ENCODE measurements at regions of chr14 and their contacts with region 1.

Region 1: DNA sequence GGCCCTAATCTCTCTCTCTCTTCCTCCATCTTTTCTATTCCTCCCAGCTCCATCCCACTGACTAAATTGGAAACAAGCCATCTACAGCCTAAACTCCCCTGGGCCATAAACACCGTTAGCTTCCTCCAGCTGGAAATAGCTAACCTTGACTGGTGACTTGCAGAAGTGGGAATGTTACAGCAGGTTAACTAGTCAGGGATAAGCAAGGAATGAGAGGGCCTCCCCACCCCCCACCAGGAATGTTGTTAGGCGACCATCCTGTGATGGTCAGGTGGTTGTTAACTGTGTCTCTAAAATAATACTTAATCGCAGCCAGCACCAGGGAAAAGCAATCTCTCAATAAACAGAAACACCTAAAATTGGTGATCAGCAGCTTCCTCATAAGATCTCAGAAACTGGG is 40.8 kb downstream of the MIS18BP1 start:
- DNase-seq: peak; percentile 73 to 79
- H3K4me3 ChIP-seq: no peak overlapping the region
- H3K4me3 Mint-ChIP-seq: peak overlapping the region; percentile 48
- H3K27ac Mint-ChIP-seq: peak overlapping the region; percentile 54
- H3K4me1 ChIP-seq: peaks cover 62% of the 10 kb centered on the region
- H3K4me1 Mint-ChIP-seq: peaks cover 30% of the 10 kb centered on the region
- H3K27me3 ChIP-seq: no peaks in the 10 kb centered on the region
- H3K27me3 Mint-ChIP-seq: no peaks in the 10 kb centered on the region
- CTCF ChIP-seq: no peak

Region 2: GRCh38 chr14:45227566-45227965 is 15.3 kb after region 1 on chr14:
- CTCF ChIA-PET with region 1: no interaction called
- POLR2A ChIA-PET with region 1: no interaction called
- intact Hi-C with region 1: no loop called
- DNase-seq: no peak
- H3K4me3 ChIP-seq: no peak overlapping the region
- H3K4me3 Mint-ChIP-seq: no peak overlapping the region
- H3K27ac Mint-ChIP-seq: no peak overlapping the region
- H3K4me1 ChIP-seq: no peaks in the 10 kb centered on the region
- H3K4me1 Mint-ChIP-seq: no peaks in the 10 kb centered on the region
- H3K27me3 ChIP-seq: no peaks in the 10 kb centered on the region
- H3K27me3 Mint-ChIP-seq: no peaks in the 10 kb centered on the region
- CTCF ChIP-seq: no peak

Region 3: GRCh38 chr14:45267071-45267470 is 54.8 kb after region 1 on chr14:
- CTCF ChIA-PET with region 1: no interaction called
- POLR2A ChIA-PET with region 1: no interaction called
- intact Hi-C with region 1: loop called (anchors 2 kb)
- DNase-seq: no peak
- H3K4me3 ChIP-seq: no peak overlapping the region
- H3K4me3 Mint-ChIP-seq: no peak overlapping the region
- H3K27ac Mint-ChIP-seq: no peak overlapping the region
- H3K4me1 ChIP-seq: no peaks in the 10 kb centered on the region
- H3K4me1 Mint-ChIP-seq: no peaks in the 10 kb centered on the region
- H3K27me3 ChIP-seq: no peaks in the 10 kb centered on the region
- H3K27me3 Mint-ChIP-seq: no peaks in the 10 kb centered on the region
- CTCF ChIP-seq: no peak

Measured in Caco-2 (cell line).